ENCODE measurements at regions of chr17 and their contacts with region 1.

Region 1: DNA sequence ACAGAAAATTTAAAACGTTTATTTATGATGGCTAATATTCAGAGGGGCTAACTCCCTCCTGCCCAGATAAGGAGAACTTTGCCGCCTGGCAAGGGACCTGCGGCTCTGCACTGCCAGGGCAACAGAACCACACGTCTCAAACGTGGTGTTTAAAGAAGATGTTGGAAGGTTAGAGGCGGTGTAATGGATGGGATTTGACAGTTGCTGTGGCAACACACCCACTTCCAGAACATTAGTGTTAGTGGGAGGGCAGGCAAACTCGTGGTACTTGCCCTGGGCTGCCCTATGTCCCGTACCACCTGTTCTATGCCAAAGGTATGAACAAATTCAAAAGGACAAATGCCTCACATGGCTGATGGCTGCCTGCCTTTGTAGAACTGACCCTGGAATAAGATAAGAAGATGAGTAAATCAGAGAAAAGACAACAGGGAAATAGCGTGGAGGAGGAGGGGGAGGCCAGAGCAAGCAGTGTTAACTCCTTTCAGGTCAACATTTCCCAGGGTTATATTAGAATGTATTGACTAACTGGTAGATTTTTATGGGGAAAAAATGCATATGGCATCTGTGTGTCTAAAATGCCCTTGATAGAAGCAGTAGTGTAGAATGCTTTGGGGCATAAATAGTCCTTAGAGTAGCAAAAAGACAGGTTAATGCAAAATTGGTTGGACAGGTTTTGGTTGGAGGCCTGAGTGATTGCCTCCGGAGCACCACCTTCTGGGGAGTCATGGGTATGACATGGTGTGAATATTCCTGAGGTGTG is 30.8 kb downstream of the HLF start:
- DNase-seq: peak; percentile 51
- H3K4me3 ChIP-seq: no peak overlapping the region
- H3K27ac ChIP-seq: no peak overlapping the region
- H3K4me1 ChIP-seq: no peaks in the 10 kb centered on the region
- H3K27me3 ChIP-seq: no peaks in the 10 kb centered on the region
- CTCF ChIP-seq: peak; percentile 86 to 91

Region 2: GRCh38 chr17:55264645-55265298 is 30.8 kb before region 1 on chr17 and contains the start of gene HLF:
- CTCF ChIA-PET with region 1: no interaction called
- dilution Hi-C with region 1: no loop called
- in situ Hi-C with region 1: no loop called
- intact Hi-C with region 1: loop called (anchors 2 kb)
- DNase-seq: peak; percentile 67
- H3K4me3 ChIP-seq: peak within 1 kb of the TSS; percentile 30 to 44 (median 30)
- H3K27ac ChIP-seq: no peak within 1 kb of the TSS
- H3K4me1 ChIP-seq: peaks cover 4% of the 10 kb centered on the region
- H3K27me3 ChIP-seq: peaks cover 14% of the 10 kb centered on the region
- CTCF ChIP-seq: no peak
- total RNA-seq, gene HLF: 0.21 to 0.67 TPM

Measured in mammary epithelial cell (primary cell).